Vagina (tissue), 2 donors: ENCODE measurements at regions of chr7 and their contacts with region 1.

Region 1: DNA sequence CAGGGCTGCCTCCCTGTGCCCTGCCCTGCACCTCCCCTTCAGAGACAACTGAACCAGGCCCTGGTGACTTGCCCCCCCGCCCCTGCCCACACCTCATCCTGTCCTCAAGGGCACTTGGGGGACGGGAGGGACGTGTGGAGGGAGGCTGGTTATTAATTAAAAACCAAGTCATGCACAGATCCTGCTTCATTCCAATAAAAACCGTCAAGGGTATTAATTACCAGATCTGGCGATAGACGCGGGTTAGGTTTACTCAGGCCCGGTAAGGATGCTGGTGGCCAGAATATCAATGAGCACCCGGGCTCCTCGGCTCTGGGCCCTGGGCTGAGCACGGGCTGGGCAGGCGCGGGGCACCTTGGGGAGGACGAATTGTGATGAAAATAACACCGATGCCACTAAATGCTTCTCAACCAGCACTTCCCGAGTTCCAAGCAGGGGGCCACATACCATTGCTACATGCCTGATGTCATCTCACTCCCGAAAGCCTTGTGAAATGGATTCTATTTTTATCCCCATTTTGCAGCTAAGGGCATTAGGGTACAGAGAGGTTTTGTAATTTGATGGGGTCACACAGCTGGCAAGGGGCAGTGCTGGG is 24.5 kb upstream of the GTF2IRD1 start:
- DNase-seq: no peak
- H3K4me3 ChIP-seq: no peak overlapping the region
- H3K27ac ChIP-seq: no peak overlapping the region
- H3K4me1 ChIP-seq: no peaks in the 10 kb centered on the region
- H3K27me3 ChIP-seq: no peaks in the 10 kb centered on the region
- CTCF ChIP-seq: no peak
- POLR2A ChIP-seq: no peak

Region 2: GRCh38 chr7:74569501-74570075 is 140.3 kb after region 1 on chr7:
- intact Hi-C with region 1: loop called (anchors 10 kb)
- DNase-seq: no peak
- H3K4me3 ChIP-seq: no peak overlapping the region
- H3K27ac ChIP-seq: no peak overlapping the region
- H3K4me1 ChIP-seq: peaks cover 14% of the 10 kb centered on the region
- H3K27me3 ChIP-seq: no peaks in the 10 kb centered on the region
- CTCF ChIP-seq: no peak
- POLR2A ChIP-seq: no peak